ENCODE measurements at regions of chr5 and their contacts with region 1.

Region 1: DNA sequence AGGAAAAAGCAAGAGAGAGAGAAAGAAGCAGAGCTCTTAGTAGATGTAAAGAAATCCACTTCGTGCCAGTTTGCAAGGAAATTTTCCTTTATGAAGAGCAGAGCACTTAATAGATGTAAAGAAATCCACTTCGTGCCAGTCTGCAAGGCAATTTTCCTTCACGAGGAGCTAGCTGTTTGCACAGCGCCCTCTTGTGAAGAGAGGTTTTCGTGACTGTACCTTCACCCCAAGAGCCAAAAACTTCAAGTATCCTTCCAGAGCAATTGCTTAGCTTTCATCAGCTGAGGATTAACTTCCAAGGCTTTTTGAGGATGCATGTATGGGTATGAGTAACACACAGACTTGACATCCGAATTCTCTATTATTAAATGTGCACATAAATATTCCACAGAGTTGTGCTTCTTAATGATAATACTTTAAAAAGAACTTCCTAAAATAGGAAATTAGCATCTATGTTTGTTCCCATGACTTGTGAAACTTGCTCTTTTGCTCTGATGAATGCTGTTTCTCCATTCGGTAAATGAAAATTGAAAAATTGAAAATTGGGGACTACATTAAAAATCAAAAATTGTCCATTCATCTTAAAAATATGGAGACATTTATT is 525.6 kb downstream of the PDE4D start:
- DNase-seq: peak in 1 of 2 experiments; percentile 38
- H3K4me3 ChIP-seq: no peak overlapping the region
- H3K27ac ChIP-seq: no peak overlapping the region
- H3K4me1 ChIP-seq: no peaks in the 10 kb centered on the region
- H3K27me3 ChIP-seq: no peaks in the 10 kb centered on the region
- CTCF ChIP-seq: peak; percentile 78

Region 2: GRCh38 chr5:59188419-59189225 is 179.3 kb before region 1 on chr5:
- CTCF ChIA-PET with region 1: interaction called, 6 read pairs
- POLR2A ChIA-PET with region 1: interaction called, 8 read pairs
- intact Hi-C with region 1: loop called (anchors 1 kb)
- DNase-seq: peak in 1 of 2 experiments; percentile 35
- H3K4me3 ChIP-seq: no peak overlapping the region; the same call in 1 of the 2 replicates
- H3K27ac ChIP-seq: no peak overlapping the region
- H3K4me1 ChIP-seq: peaks cover 4% of the 10 kb centered on the region
- H3K27me3 ChIP-seq: no peaks in the 10 kb centered on the region
- CTCF ChIP-seq: peak; percentile 89

Region 3: GRCh38 chr5:59218424-59219045 is 149.4 kb before region 1 on chr5:
- CTCF ChIA-PET with region 1: interaction called, 3 read pairs
- POLR2A ChIA-PET with region 1: no interaction called
- intact Hi-C with region 1: loop called (anchors 2 kb)
- DNase-seq: no peak
- H3K4me3 ChIP-seq: no peak overlapping the region
- H3K27ac ChIP-seq: no peak overlapping the region
- H3K4me1 ChIP-seq: no peaks in the 10 kb centered on the region; the same call in 1 of the 2 replicates
- H3K27me3 ChIP-seq: no peaks in the 10 kb centered on the region
- CTCF ChIP-seq: peak; percentile 69